Heart right ventricle (tissue), 16 donors: ENCODE measurements at regions of chr22 and their contacts with region 1.

Region 1: DNA sequence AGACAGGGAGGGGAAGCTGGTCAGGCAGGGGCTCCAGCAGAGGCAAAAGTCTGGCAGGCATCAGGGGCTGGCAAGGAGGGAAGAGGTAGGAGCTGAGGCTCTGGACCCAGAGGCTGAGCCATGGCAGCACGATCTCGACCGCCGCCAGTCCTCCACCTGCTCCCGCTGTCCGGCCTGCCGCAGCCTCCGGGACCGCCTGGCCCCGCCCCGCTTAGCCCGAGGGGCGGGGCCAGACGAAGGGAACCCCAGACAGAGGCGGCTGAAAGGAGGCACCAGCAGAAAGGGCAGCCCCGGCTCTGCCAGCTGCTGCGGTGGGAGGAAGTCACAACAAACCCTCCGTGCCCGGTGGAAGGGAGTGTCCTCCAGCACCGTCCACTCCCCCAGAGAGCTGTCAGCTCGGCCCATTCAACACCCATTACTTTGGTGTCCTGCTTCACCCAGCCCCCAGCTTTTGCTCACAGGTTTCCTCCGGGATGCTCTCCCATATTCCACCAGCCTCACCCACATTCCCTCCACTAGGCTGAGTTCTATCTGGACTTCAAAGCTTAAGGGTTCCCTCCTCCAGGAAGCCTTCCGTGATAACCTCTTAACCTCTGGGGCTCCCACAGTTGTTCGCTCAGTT is at the start of gene MFNG:
- DNase-seq: peak; percentile 66 to 74
- ATAC-seq: peak; percentile 64 to 84 (median 77)
- H3K4me3 ChIP-seq: peak within 1 kb of the TSS in 9 of 10 donors; percentile 34 to 74 (median 53)
- H3K27ac ChIP-seq: peak within 1 kb of the TSS; percentile 68 to 97 (median 86)
- H3K4me1 ChIP-seq: peaks cover 0 to 44% (median 33%) of the 10 kb centered on the region in 9 donors
- H3K27me3 ChIP-seq: peaks cover 0 to 20% (median 0%) of the 10 kb centered on the region in 7 donors
- CTCF ChIP-seq: no peak
- total RNA-seq, gene MFNG: 5.1 to 19.4 (median 8.5) TPM

Region 2: DNA sequence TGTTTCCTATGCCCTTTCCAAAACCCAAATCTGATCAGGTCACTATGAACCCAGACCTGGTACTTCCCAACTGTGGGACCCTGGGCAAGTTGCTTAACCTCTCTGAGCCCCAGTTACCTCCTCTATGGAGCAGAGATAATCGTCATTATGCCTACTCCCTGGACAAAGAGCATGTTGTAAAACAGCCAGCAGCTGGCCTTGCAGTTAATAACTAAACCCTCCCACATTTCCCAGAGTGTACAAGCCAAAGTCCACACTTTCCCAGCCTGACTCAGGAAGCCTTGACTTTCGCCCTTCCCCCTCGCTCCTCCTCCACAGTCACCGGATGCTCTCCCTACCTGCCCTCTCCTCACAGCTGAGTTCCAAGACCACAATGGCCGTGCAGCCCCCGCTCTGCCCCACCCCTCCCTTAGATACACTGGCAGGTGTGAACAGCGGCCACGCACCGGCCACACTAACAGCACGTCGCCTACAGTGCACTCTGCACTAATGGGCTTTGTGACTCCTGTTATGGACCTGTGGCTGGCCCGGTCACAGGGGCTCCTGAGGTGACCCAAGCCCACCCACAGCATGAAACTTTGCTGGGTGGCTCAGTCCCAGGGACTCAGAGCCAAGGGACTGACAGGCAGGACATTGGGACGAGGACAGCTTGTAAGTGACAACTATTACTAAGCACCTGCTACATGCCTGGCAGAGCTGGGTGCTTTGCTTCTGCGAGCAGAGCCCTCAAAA is 15.4 kb after region 1 on chr22:
- intact Hi-C with region 1: loop called in 1 of 10 experiments (anchors 2 kb)
- DNase-seq: peak; percentile 63 to 89
- ATAC-seq: peak; percentile 56 to 90 (median 84)
- H3K4me3 ChIP-seq: peak overlapping the region in 4 of 10 donors; percentile 12 to 36 (median 24)
- H3K27ac ChIP-seq: peak overlapping the region; percentile 66 to 89 (median 84)
- H3K4me1 ChIP-seq: peaks cover 6 to 100% (median 65%) of the 10 kb centered on the region in 9 donors
- H3K27me3 ChIP-seq: peaks cover 0 to 14% (median 0%) of the 10 kb centered on the region in 7 donors
- CTCF ChIP-seq: no peak